ENCODE measurements at regions of chr20 and their contacts with region 1.

Region 1: GRCh38 chr20:1466211-1467081 is at the start of gene NSFL1C:
- ATAC-seq: peak; percentile 71 to 97 (median 93)
- H3K4me3 ChIP-seq: peak within 1 kb of the TSS; percentile 82 to 99 (median 88)
- H3K27ac ChIP-seq: peak within 1 kb of the TSS; percentile 85 to 98
- H3K4me1 ChIP-seq: peaks cover 9 to 11% of the 10 kb centered on the region in 2 donors
- total RNA-seq, gene NSFL1C: 40.7 to 65.6 (median 58.2) TPM

Region 2: GRCh38 chr20:1313236-1313964 is 153.0 kb before region 1 on chr20:
- in situ Hi-C with region 1: loop called in 3 of 9 experiments (anchors 10 to 25 kb)
- ATAC-seq: peak; percentile 76 to 96 (median 88)
- H3K4me3 ChIP-seq: peak overlapping the region in 2 of 5 donors; percentile 14 to 23
- H3K27ac ChIP-seq: no peak overlapping the region
- H3K4me1 ChIP-seq: peaks cover 0 to 5% of the 10 kb centered on the region in 2 donors